Activated B cell treated with CpG ODN at 0.5 μM for 24 hours (primary cell): ENCODE measurements at regions of chrX and their contacts with region 1.

Region 1: GRCh38 chrX:3713225-3713936 is at the start of gene PRKX:
- DNase-seq: peak; percentile 65
- ATAC-seq: peak; percentile 83
- H3K4me3 Mint-ChIP-seq: peak within 1 kb of the TSS; percentile 91
- H3K27ac Mint-ChIP-seq: peak within 1 kb of the TSS; percentile 73
- H3K4me1 Mint-ChIP-seq: peaks cover 20% of the 10 kb centered on the region
- H3K27me3 Mint-ChIP-seq: no peaks in the 10 kb centered on the region
- CTCF ChIP-seq: no peak
- total RNA-seq, gene PRKX: 23.9 and 24.3 TPM in 2 replicates

Region 2: DNA sequence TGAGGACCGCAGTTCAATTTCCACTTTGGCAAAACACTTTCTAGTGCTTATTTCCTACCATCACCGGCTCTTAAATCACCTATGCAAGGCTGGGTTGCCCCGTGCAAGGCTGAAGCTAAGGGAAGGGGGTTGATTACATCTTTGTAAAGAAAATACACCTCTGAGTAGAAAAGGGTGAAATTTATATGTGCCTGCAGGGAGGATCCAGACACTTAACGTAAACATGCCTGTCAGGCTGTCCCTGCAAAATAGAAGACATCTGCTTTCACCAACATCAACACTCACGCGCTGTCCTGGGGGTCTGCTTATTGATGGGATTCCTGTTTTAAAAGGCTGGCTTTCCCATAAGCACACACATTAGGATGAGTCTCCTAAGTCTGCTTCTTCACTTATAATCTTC is 92.0 kb before region 1 on chrX:
- CTCF ChIA-PET with region 1: no interaction called
- POLR2A ChIA-PET with region 1: no interaction called
- intact Hi-C with region 1: no loop called
- DNase-seq: no peak
- ATAC-seq: no peak
- H3K4me3 Mint-ChIP-seq: no peak overlapping the region
- H3K27ac Mint-ChIP-seq: no peak overlapping the region
- H3K4me1 Mint-ChIP-seq: no peaks in the 10 kb centered on the region
- H3K27me3 Mint-ChIP-seq: no peaks in the 10 kb centered on the region
- CTCF ChIP-seq: no peak

Region 3: GRCh38 chrX:3651276-3651675 is 62.1 kb before region 1 on chrX:
- CTCF ChIA-PET with region 1: interaction called, 4 read pairs
- POLR2A ChIA-PET with region 1: interaction called, 3 read pairs
- intact Hi-C with region 1: loop called (anchors 5 kb)
- DNase-seq: no peak
- ATAC-seq: no peak
- H3K4me3 Mint-ChIP-seq: no peak overlapping the region
- H3K27ac Mint-ChIP-seq: no peak overlapping the region
- H3K4me1 Mint-ChIP-seq: no peaks in the 10 kb centered on the region
- H3K27me3 Mint-ChIP-seq: no peaks in the 10 kb centered on the region
- CTCF ChIP-seq: no peak

Region 4: GRCh38 chrX:3697701-3698279 is 15.6 kb before region 1 on chrX:
- CTCF ChIA-PET with region 1: interaction called, 5 read pairs
- POLR2A ChIA-PET with region 1: interaction called, 27 read pairs
- intact Hi-C with region 1: loop called (anchors 1 kb)
- DNase-seq: no peak
- ATAC-seq: peak; percentile 65
- H3K4me3 Mint-ChIP-seq: no peak overlapping the region
- H3K27ac Mint-ChIP-seq: peak overlapping the region; percentile 64
- H3K4me1 Mint-ChIP-seq: peaks cover 58% of the 10 kb centered on the region
- H3K27me3 Mint-ChIP-seq: no peaks in the 10 kb centered on the region
- CTCF ChIP-seq: no peak

Region 5: GRCh38 chrX:4935846-4936245 is 1222.5 kb after region 1 on chrX:
- CTCF ChIA-PET with region 1: no interaction called
- POLR2A ChIA-PET with region 1: no interaction called
- intact Hi-C with region 1: loop called (anchors 5 kb)
- DNase-seq: no peak
- ATAC-seq: peak; percentile 76
- H3K4me3 Mint-ChIP-seq: peak overlapping the region; percentile 32
- H3K27ac Mint-ChIP-seq: peak overlapping the region; percentile 77
- H3K4me1 Mint-ChIP-seq: peaks cover 25% of the 10 kb centered on the region
- H3K27me3 Mint-ChIP-seq: no peaks in the 10 kb centered on the region
- CTCF ChIP-seq: no peak